Activated CD8-positive, alpha-beta memory T cell treated with anti-CD3 and anti-CD28 coated beads, Interleukin-2, amount 10 ng/mL, durations not matched to agents 7 days and 5 days (primary cell): ENCODE measurements at regions of chr10 and their contacts with region 1.

Region 1: GRCh38 chr10:93512565-93512964 is 16.2 kb downstream of the CEP55 start:
- DNase-seq: no peak
- ATAC-seq: no peak
- H3K4me3 Mint-ChIP-seq: no peak overlapping the region
- H3K27ac Mint-ChIP-seq: no peak overlapping the region
- H3K4me1 Mint-ChIP-seq: peaks cover 24% of the 10 kb centered on the region
- H3K27me3 Mint-ChIP-seq: no peaks in the 10 kb centered on the region

Region 2: GRCh38 chr10:93357680-93358079 is 154.9 kb before region 1 on chr10:
- CTCF ChIA-PET with region 1: interaction called, 14 read pairs
- DNase-seq: no peak
- ATAC-seq: peak; percentile 55
- H3K4me3 Mint-ChIP-seq: no peak overlapping the region
- H3K27ac Mint-ChIP-seq: no peak overlapping the region
- H3K4me1 Mint-ChIP-seq: peaks cover 6% of the 10 kb centered on the region
- H3K27me3 Mint-ChIP-seq: no peaks in the 10 kb centered on the region

Region 3: DNA sequence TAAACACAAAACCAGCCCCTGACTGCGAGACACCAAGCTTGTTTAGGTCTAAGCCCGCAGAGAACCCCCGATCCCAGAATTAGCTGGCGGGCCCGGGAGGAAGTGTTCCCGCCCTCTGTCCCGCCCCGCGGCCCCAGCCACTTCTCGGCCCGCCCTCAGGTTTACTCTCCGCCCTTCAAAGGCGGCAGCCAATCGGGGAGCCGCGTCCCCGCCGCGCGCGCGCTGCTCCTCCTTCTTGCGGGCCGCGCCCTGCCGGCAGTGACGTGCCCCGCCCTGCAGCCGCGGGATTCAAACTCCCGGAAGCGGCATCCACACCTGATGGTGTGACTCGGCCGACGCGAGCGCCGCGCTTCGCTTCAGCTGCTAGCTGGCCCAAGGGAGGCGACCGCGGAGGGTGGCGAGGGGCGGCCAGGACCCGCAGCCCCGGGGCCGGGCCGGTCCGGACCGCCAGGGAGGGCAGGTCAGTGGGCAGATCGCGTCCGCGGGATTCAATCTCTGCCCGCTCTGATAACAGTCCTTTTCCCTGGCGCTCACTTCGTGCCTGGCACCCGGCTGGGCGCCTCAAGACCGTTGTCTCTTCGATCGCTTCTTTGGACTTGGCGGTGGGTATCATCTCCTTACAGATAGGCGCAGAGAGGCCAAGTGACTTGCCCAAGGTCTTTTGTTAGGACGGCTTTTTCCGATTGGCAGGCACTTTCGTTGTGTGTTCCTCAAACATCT is 16.1 kb before region 1 on chr10 and contains the start of gene CEP55:
- CTCF ChIA-PET with region 1: interaction called, 30 read pairs
- DNase-seq: peak; percentile 97
- ATAC-seq: peak; percentile 99
- H3K4me3 Mint-ChIP-seq: peak within 1 kb of the TSS; percentile 96
- H3K27ac Mint-ChIP-seq: peak within 1 kb of the TSS; percentile 96
- H3K4me1 Mint-ChIP-seq: peaks cover 37% of the 10 kb centered on the region
- H3K27me3 Mint-ChIP-seq: no peaks in the 10 kb centered on the region
- total RNA-seq, gene CEP55: 75.6 to 79.3 TPM